PC-3 (cell line): ENCODE measurements at regions of chrX and their contacts with region 1.

Region 1: GRCh38 chrX:29397506-29397905 is 810.3 kb downstream of the IL1RAPL1 start:
- DNase-seq: no peak
- ATAC-seq: no peak
- H3K4me3 ChIP-seq: no peak overlapping the region
- H3K27ac ChIP-seq: no peak overlapping the region
- H3K4me1 ChIP-seq: no peaks in the 10 kb centered on the region
- H3K27me3 ChIP-seq: no peaks in the 10 kb centered on the region
- CTCF ChIP-seq: no peak

Region 2: DNA sequence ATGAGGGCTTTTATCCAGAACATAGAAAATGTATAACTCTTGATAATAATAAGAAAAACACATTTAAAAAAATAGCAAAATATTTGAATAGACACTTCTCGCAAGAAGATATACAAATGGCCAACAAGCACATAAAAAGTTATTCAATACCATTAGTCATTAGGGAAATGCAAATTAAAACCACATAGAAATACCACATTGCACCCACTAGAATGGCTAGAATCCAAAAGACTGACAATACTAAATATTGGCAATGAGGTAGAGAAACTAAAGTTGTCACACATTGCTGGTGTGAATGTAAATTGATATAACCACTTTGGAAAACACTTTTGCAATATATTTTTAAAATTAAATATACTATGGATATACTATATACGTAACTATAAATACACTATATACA is 63.5 kb after region 1 on chrX:
- CTCF ChIA-PET with region 1: no interaction called
- POLR2A ChIA-PET with region 1: no interaction called
- intact Hi-C with region 1: loop called (anchors 1 kb)
- DNase-seq: no peak
- ATAC-seq: no peak
- H3K4me3 ChIP-seq: no peak overlapping the region
- H3K27ac ChIP-seq: no peak overlapping the region
- H3K4me1 ChIP-seq: no peaks in the 10 kb centered on the region
- H3K27me3 ChIP-seq: no peaks in the 10 kb centered on the region
- CTCF ChIP-seq: no peak

Region 3: GRCh38 chrX:29488919-29489318 is 91.4 kb after region 1 on chrX:
- CTCF ChIA-PET with region 1: no interaction called
- POLR2A ChIA-PET with region 1: no interaction called
- intact Hi-C with region 1: no loop called
- DNase-seq: no peak
- ATAC-seq: no peak
- H3K4me3 ChIP-seq: no peak overlapping the region
- H3K27ac ChIP-seq: no peak overlapping the region
- H3K4me1 ChIP-seq: peaks cover 25% of the 10 kb centered on the region
- H3K27me3 ChIP-seq: no peaks in the 10 kb centered on the region
- CTCF ChIP-seq: no peak

Region 4: DNA sequence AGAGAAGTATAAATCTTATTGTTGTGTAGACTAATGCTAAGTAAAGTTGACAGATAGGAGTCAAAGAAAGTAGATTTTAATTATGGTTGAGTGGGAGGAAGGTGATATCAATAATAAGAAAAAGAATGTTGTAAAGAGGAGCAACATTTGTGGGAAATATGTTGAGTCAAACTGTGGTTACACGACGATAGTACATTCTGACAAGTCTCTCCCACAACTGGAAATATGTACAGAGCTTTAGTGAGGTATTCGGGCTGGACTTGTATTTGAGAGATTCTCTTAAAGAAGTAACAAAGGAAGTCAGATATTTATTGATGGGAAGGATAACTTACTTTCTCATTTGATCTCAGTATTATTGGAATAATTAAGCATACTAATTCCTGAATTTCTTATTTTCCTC is 292.6 kb after region 1 on chrX:
- CTCF ChIA-PET with region 1: no interaction called
- POLR2A ChIA-PET with region 1: no interaction called
- intact Hi-C with region 1: no loop called
- DNase-seq: no peak
- ATAC-seq: no peak
- H3K4me3 ChIP-seq: no peak overlapping the region
- H3K27ac ChIP-seq: no peak overlapping the region
- H3K4me1 ChIP-seq: no peaks in the 10 kb centered on the region; the same call in 1 of the 2 replicates
- H3K27me3 ChIP-seq: no peaks in the 10 kb centered on the region
- CTCF ChIP-seq: no peak